Heart left ventricle (tissue), 16 donors: ENCODE measurements at regions of chr7 and their contacts with region 1.

Region 1: DNA sequence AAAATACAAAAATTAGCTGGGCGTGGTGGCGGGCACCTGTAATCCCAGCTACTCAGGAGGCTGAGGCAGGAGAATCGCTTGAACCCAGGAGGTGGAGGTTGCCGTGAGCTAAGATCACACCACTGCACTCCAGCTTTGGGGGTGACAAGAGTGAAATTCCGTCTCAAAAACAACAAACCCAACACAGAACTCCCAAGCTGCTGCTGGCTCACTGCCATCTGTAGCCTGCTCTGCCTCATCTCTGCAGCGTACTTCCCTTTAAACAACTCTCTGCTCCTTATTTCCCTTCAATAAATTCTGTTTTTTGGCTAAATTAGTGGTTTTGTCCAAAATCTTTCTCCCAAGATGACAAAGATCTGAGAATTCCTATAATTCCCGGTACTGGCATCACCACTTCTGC is 189.2 kb upstream of the GALNT17 start:
- DNase-seq: no peak
- ATAC-seq: no peak
- H3K4me3 ChIP-seq: no peak overlapping the region
- H3K27ac ChIP-seq: no peak overlapping the region
- H3K4me1 ChIP-seq: no peaks in the 10 kb centered on the region
- H3K27me3 ChIP-seq: no peaks in the 10 kb centered on the region
- CTCF ChIP-seq: no peak
- POLR2A ChIP-seq: no peak

Region 2: DNA sequence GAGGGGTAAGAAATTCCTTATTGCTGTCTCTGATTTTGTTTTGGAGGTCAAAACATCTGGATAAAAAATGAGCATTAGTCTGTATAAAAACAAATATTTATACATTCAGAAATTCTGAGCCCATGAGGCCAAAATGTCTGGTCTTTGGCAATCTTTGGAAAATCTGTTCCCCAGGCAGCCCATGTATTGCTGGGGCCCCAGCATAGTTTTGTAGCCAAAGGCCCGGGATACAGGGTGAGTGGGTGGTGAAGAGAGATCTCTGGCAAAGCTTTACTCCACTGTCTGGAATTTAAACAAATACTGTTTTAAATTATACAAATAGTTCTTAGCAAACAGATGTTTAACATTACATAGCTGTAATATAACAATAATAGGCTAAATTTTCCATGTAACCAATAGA is 54.5 kb after region 1 on chr7:
- intact Hi-C with region 1: loop called in 1 of 10 experiments (anchors 2 kb)
- DNase-seq: no peak
- ATAC-seq: no peak
- H3K4me3 ChIP-seq: no peak overlapping the region
- H3K27ac ChIP-seq: no peak overlapping the region
- H3K4me1 ChIP-seq: no peaks in the 10 kb centered on the region
- H3K27me3 ChIP-seq: peaks cover 0 to 3% (median 0%) of the 10 kb centered on the region in 9 donors
- CTCF ChIP-seq: no peak
- POLR2A ChIP-seq: no peak